ENCODE measurements at regions of chr16 and their contacts with region 1.

Region 1: DNA sequence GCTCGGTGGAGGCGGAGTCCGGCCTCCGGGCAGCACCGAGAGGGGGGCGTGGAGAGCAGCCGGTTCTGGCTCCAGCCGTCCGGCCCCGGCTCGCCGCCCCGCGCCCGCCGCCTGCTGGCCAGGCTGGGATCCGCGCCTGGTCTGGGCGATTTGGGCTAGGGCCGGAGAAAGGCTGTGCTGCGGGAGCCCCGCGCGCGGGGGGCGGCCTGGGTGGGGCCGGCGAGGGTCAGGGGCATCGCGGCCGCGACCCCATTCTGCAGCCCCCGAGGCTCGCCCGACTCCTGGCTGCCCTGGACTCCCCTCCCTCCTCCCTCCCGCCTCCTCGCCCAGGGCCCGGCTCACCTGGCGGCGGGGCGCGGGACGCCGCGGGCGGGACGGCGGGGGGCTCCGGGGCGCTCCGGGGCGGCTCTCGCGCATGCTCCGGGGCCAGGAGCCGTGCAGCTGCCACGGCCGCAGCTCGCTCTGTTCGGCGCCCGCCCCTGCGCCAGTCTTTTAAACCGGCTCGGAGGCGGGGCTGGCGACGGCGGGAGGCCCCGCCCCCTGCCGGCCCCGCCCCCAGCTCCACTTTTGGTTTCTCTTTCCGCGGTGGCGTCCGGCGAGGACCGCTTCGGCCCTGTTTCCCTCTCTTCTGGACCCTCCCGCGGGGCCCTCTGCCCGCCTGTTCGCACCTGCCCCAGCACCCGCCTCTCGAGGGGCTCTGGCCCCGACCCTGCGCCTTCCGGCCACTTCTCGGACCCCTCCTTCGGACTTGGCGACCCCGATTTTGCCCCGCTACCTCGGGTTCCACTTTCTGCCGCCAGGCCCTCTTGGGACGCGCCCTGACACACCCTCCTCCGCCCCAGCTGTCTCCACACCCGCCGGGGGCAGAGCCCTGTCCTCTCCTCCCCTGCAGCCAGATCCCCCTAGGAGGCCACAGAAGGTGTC is at the start of gene SOCS1:
- DNase-seq: peak; percentile 80
- H3K4me3 Mint-ChIP-seq: peak within 1 kb of the TSS; percentile 97
- H3K27ac Mint-ChIP-seq: peak within 1 kb of the TSS; percentile 98
- H3K4me1 Mint-ChIP-seq: peaks cover 8% of the 10 kb centered on the region
- H3K27me3 Mint-ChIP-seq: no peaks in the 10 kb centered on the region
- CTCF ChIP-seq: peak; percentile 95
- total RNA-seq, gene SOCS1: 1.4 and 1.6 TPM in 2 replicates

Region 2: GRCh38 chr16:10954903-10955302 is 301.1 kb before region 1 on chr16:
- CTCF ChIA-PET with region 1: interaction called, 342 read pairs
- POLR2A ChIA-PET with region 1: interaction called, 12 read pairs
- intact Hi-C with region 1: no loop called
- DNase-seq: no peak
- H3K4me3 Mint-ChIP-seq: no peak overlapping the region
- H3K27ac Mint-ChIP-seq: no peak overlapping the region
- H3K4me1 Mint-ChIP-seq: peaks cover 18% of the 10 kb centered on the region
- H3K27me3 Mint-ChIP-seq: no peaks in the 10 kb centered on the region
- CTCF ChIP-seq: no peak

Region 3: GRCh38 chr16:10971560-10971961 is 284.4 kb before region 1 on chr16:
- CTCF ChIA-PET with region 1: interaction called, 342 read pairs
- POLR2A ChIA-PET with region 1: interaction called, 26 read pairs
- intact Hi-C with region 1: loop called (anchors 1 kb)
- DNase-seq: peak; percentile 69
- H3K4me3 Mint-ChIP-seq: no peak overlapping the region
- H3K27ac Mint-ChIP-seq: no peak overlapping the region
- H3K4me1 Mint-ChIP-seq: peaks cover 5% of the 10 kb centered on the region
- H3K27me3 Mint-ChIP-seq: no peaks in the 10 kb centered on the region
- CTCF ChIP-seq: peak; percentile 72

Region 4: GRCh38 chr16:10992797-10993196 is 263.2 kb before region 1 on chr16:
- CTCF ChIA-PET with region 1: interaction called, 8 read pairs
- POLR2A ChIA-PET with region 1: interaction called, 12 read pairs
- intact Hi-C with region 1: no loop called
- DNase-seq: peak; percentile 89
- H3K4me3 Mint-ChIP-seq: peak overlapping the region; percentile 56
- H3K27ac Mint-ChIP-seq: peak overlapping the region; percentile 75
- H3K4me1 Mint-ChIP-seq: peaks cover 47% of the 10 kb centered on the region
- H3K27me3 Mint-ChIP-seq: no peaks in the 10 kb centered on the region
- CTCF ChIP-seq: no peak

Region 5: DNA sequence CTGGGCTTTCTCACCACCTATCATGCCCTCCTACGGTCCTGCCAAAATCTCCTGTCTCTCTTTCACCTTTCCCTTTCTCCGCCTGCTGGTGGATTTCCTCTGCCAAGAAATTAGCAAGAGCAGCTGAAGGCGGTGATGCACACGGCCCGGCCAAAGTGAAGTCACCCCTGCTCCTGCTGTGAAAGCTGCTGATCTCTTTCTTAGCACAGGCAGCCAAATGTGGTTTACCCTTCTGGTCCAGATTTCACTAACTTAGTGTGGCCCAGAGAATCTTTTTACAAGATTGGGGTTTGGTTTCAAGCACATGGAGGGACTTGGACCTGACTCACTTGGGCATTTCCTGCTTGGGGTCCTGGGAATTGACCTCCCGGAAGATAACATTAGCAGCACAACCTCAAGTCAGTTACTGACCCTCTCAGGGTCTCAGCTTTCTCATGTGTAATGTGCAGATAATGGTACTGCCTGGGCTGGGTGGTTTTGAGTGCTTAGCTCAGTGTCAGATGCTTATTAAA is 155.7 kb before region 1 on chr16:
- CTCF ChIA-PET with region 1: interaction called, 8 read pairs
- POLR2A ChIA-PET with region 1: interaction called, 3 read pairs
- intact Hi-C with region 1: loop called (anchors 5 kb)
- DNase-seq: peak; percentile 67
- H3K4me3 Mint-ChIP-seq: no peak overlapping the region
- H3K27ac Mint-ChIP-seq: peak overlapping the region; percentile 28
- H3K4me1 Mint-ChIP-seq: peaks cover 12% of the 10 kb centered on the region
- H3K27me3 Mint-ChIP-seq: no peaks in the 10 kb centered on the region
- CTCF ChIP-seq: no peak

Region 6: DNA sequence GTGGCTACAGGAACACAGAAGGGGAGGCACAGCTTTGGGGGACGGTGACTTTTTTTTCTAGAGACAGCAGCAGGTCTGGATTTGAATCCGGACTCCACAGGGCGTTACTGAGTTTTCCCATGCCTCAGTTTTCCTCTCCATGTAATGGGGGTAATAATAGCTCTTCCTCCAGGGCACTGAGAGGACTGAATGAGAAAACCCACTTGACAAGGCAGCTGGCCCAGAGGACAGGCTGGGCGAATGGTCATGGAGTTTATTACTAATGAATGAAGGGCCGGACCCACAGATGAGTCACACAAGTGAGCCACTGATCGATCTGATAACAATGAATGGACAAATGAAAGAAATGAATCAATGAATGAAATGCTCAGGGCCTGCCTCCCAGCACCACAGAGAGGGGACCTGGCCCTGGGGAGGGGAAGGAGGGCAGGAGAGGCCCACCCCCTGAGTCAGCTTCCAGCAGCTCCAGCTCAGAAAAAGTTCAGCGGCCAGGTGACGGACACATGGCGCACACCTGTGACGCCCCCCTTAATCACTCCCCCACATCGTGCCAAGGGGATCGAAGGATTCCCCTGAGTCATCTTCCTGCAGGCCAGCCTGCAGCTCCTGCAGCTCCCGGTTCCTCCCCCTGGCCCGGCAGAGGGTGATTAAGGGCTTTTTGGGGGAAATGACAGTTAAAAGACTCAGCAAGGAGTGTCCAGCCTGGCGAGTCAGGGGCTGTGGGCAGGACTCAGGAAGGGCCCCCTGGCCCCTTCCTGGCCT is 54.3 kb before region 1 on chr16:
- CTCF ChIA-PET with region 1: interaction called, 4 read pairs
- POLR2A ChIA-PET with region 1: no interaction called
- intact Hi-C with region 1: loop called (anchors 5 kb)
- DNase-seq: peak; percentile 66
- H3K4me3 Mint-ChIP-seq: peak overlapping the region; percentile 15
- H3K27ac Mint-ChIP-seq: peak overlapping the region; percentile 49
- H3K4me1 Mint-ChIP-seq: peaks cover 32% of the 10 kb centered on the region
- H3K27me3 Mint-ChIP-seq: no peaks in the 10 kb centered on the region
- CTCF ChIP-seq: no peak

Region 7: GRCh38 chr16:11370084-11370931 is 114.3 kb after region 1 on chr16:
- CTCF ChIA-PET with region 1: no interaction called
- POLR2A ChIA-PET with region 1: no interaction called
- intact Hi-C with region 1: loop called (anchors 5 kb)
- DNase-seq: no peak
- H3K4me3 Mint-ChIP-seq: no peak overlapping the region
- H3K27ac Mint-ChIP-seq: no peak overlapping the region
- H3K4me1 Mint-ChIP-seq: peaks cover 10% of the 10 kb centered on the region
- H3K27me3 Mint-ChIP-seq: no peaks in the 10 kb centered on the region
- CTCF ChIP-seq: no peak

Region 8: DNA sequence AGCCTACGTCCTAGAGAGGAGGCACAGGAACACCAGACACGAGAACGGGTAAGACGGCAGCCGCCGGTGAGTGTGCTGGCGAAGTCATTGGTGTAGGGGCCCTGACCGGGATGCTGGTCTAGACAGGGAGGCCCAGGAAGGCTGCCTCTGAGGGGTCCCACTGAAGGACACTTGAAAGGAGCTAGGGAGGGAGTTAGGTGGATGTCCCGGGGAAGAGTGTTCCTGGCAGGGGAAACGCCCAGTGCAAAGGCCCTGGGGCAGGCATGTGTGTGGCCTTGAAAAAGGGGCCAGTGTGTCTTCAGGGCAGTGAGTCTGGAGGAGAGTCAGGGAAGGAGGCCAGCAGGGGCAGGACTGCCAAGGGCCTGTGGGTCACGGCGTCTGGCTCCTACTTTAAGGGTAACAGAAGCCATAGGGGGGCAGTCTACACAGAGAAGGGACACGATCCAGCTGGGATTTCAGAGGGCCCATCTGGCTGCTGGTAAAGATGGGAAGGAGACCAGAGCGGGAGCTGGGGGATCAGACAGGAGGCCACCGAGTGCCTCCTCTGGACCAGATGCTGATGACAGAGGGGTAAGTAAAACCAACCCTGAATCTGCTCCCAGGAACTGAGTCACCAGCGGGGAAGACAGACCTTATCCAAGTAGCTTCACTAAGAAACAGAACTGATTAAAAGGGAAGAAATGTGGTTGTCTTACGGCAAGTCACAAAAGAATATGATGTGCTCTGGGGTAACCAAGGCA is 214.8 kb after region 1 on chr16:
- CTCF ChIA-PET with region 1: no interaction called
- POLR2A ChIA-PET with region 1: no interaction called
- intact Hi-C with region 1: no loop called
- DNase-seq: no peak
- H3K4me3 Mint-ChIP-seq: no peak overlapping the region
- H3K27ac Mint-ChIP-seq: no peak overlapping the region
- H3K4me1 Mint-ChIP-seq: no peaks in the 10 kb centered on the region
- H3K27me3 Mint-ChIP-seq: no peaks in the 10 kb centered on the region
- CTCF ChIP-seq: no peak

Measured in MCF 10A (cell line).